ENCODE measurements at regions of chr10 and their contacts with region 1.

Region 1: DNA sequence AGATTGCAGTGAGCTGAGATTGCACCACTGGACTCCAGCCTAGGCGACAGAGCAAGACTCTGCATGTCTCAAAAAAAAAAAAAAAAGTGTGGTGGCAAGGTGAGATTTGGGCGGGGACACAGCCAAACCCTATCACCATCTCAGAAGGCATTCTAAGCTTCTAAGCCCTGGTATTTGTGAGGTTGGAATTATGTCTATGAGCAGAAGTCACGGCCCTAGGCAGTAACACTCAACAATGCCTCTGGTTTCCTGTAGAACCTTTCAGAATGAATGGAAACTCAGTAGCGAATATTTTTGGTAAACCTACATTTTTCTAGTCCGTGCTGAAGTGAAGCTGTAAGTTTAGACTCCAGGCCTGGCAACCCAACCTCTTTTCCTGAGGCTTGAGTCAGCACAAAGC is 88.4 kb downstream of the FAM107B start:
- DNase-seq: no peak
- H3K4me3 Mint-ChIP-seq: no peak overlapping the region
- H3K27ac Mint-ChIP-seq: no peak overlapping the region
- H3K4me1 Mint-ChIP-seq: peaks cover 19% of the 10 kb centered on the region
- H3K27me3 Mint-ChIP-seq: no peaks in the 10 kb centered on the region

Region 2: DNA sequence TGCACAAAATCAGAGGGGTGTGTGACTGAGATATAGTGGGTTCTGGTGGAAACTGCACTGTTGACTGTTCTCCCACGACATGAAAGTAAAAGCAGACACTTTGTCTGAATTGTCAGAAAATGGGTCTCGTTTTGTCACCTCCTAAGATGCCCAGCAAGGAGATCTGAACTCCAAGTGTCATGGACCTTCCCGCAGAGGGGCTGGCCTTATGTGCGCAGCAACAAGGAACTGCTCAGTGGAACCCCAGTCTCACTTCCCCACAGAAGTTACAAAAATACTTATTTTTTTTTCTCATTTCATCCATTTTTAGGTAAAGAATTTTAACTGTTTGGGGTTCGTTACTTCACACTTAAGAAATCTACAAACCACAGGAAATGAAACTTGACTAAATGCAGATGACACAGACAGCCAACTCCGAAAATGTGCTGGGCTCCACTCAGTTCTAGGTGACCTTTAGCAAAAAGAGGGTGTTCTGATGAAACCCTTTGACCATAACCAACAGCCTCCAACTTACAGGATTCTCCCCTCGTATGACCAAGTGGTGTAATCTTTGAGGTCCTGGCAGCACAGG is 26.6 kb before region 1 on chr10:
- intact Hi-C with region 1: loop called (anchors 1 kb)
- DNase-seq: peak; percentile 89
- H3K4me3 Mint-ChIP-seq: peak overlapping the region; percentile 64
- H3K27ac Mint-ChIP-seq: peak overlapping the region; percentile 92
- H3K4me1 Mint-ChIP-seq: peaks cover 60% of the 10 kb centered on the region
- H3K27me3 Mint-ChIP-seq: no peaks in the 10 kb centered on the region

Measured in activated CD4-positive, alpha-beta T cell treated with anti-CD3 and anti-CD28 coated beads, Interleukin-2, amount 10 ng/mL, durations not matched to agents 24 days and 14 days (primary cell).